Activated CD8-positive, alpha-beta T cell treated with anti-CD3 and anti-CD28 coated beads for 36 hours (primary cell): ENCODE measurements at regions of chr3 and their contacts with region 1.

Region 1: GRCh38 chr3:161274719-161275298 is 53.7 kb downstream of the NMD3 start:
- DNase-seq: peak; percentile 63
- ATAC-seq: peak; percentile 42
- H3K4me3 Mint-ChIP-seq: no peak overlapping the region
- H3K27ac Mint-ChIP-seq: no peak overlapping the region
- H3K4me1 Mint-ChIP-seq: no peaks in the 10 kb centered on the region
- H3K27me3 Mint-ChIP-seq: no peaks in the 10 kb centered on the region
- CTCF ChIP-seq: peak; percentile 54

Region 2: DNA sequence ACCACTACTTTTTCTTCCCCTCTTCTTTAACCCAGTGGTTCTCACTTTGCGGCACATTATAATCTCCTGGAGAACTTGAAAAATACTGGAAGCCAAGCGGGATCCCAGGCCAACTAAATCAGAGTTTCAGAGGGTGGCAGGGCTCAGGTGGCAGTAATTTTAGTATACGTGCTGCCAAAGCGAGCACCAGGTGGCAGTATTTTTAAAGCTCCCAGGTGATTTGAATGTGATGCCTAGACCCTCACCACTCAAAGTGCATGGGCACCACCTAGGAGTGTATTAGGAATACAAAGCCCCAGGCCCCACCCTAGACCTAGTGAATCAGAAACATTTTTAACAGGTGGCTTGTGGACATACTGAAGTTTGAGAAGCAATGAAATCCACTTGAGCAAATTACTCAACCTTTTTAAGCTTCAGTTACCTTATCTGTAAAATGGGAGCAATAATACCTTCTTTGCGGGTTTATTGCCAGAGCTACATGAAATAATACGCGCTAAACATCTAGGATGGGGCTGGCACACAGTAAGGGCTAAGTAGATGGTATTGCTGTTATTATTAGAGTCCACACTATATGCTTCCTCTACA is 177.9 kb before region 1 on chr3:
- CTCF ChIA-PET with region 1: interaction called, 17 read pairs
- POLR2A ChIA-PET with region 1: no interaction called
- intact Hi-C with region 1: no loop called
- DNase-seq: peak; percentile 41
- ATAC-seq: peak; percentile 24
- H3K4me3 Mint-ChIP-seq: no peak overlapping the region
- H3K27ac Mint-ChIP-seq: no peak overlapping the region
- H3K4me1 Mint-ChIP-seq: no peaks in the 10 kb centered on the region
- H3K27me3 Mint-ChIP-seq: no peaks in the 10 kb centered on the region
- CTCF ChIP-seq: peak; percentile 40

Region 3: GRCh38 chr3:161284989-161285388 is 10.2 kb after region 1 on chr3:
- CTCF ChIA-PET with region 1: interaction called, 11 read pairs
- POLR2A ChIA-PET with region 1: no interaction called
- intact Hi-C with region 1: no loop called
- DNase-seq: no peak
- ATAC-seq: no peak
- H3K4me3 Mint-ChIP-seq: no peak overlapping the region
- H3K27ac Mint-ChIP-seq: no peak overlapping the region
- H3K4me1 Mint-ChIP-seq: no peaks in the 10 kb centered on the region
- H3K27me3 Mint-ChIP-seq: no peaks in the 10 kb centered on the region
- CTCF ChIP-seq: no peak

Region 4: GRCh38 chr3:161291195-161291912 is 16.5 kb after region 1 on chr3:
- CTCF ChIA-PET with region 1: interaction called, 14 read pairs
- POLR2A ChIA-PET with region 1: no interaction called
- intact Hi-C with region 1: no loop called
- DNase-seq: no peak
- ATAC-seq: no peak
- H3K4me3 Mint-ChIP-seq: no peak overlapping the region
- H3K27ac Mint-ChIP-seq: no peak overlapping the region
- H3K4me1 Mint-ChIP-seq: no peaks in the 10 kb centered on the region
- H3K27me3 Mint-ChIP-seq: peaks cover 2% of the 10 kb centered on the region
- CTCF ChIP-seq: no peak

Region 5: GRCh38 chr3:161305095-161305991 is 30.5 kb after region 1 on chr3:
- CTCF ChIA-PET with region 1: interaction called, 26 read pairs
- POLR2A ChIA-PET with region 1: no interaction called
- intact Hi-C with region 1: no loop called
- DNase-seq: peak; percentile 20
- ATAC-seq: peak; percentile 58
- H3K4me3 Mint-ChIP-seq: no peak overlapping the region
- H3K27ac Mint-ChIP-seq: no peak overlapping the region
- H3K4me1 Mint-ChIP-seq: peaks cover 30% of the 10 kb centered on the region
- H3K27me3 Mint-ChIP-seq: peaks cover 25% of the 10 kb centered on the region
- CTCF ChIP-seq: peak; percentile 86

Region 6: GRCh38 chr3:161409069-161409468 is 134.3 kb after region 1 on chr3:
- CTCF ChIA-PET with region 1: interaction called, 52 read pairs
- POLR2A ChIA-PET with region 1: no interaction called
- intact Hi-C with region 1: loop called (anchors 1 kb)
- DNase-seq: peak; percentile 56
- ATAC-seq: peak; percentile 58
- H3K4me3 Mint-ChIP-seq: no peak overlapping the region
- H3K27ac Mint-ChIP-seq: no peak overlapping the region
- H3K4me1 Mint-ChIP-seq: peaks cover 17% of the 10 kb centered on the region
- H3K27me3 Mint-ChIP-seq: peaks cover 6% of the 10 kb centered on the region
- CTCF ChIP-seq: peak; percentile 83

Region 7: DNA sequence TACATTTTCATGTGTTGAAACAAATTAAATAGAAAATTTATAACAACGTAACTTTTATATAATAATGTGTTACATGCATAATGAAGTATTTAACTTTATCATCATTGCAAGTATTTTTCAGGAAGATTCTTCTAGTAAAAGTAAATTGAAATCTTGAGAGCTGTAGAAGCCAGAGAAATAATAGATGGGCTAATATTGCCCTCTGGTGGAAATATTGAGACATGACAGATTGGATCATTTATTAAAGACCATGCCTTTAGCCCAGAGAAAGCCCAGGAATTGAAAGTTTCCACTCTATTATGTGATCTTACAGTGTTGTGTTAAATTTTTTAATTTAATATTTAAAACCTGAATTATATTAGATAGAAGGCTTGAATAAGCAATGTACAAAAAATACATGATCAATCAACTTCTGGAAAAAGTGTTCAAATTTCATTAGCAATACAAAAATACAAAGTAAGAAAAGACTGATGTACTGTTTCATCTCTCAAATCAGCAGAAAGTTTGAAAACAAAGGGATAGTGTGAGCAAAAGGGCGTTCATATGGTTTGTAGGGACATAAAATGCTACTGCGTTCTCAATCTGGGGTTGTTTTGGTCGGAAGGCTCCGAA is 149.2 kb after region 1 on chr3:
- CTCF ChIA-PET with region 1: interaction called, 48 read pairs
- POLR2A ChIA-PET with region 1: no interaction called
- intact Hi-C with region 1: loop called (anchors 5 kb)
- DNase-seq: no peak
- ATAC-seq: peak; percentile 42
- H3K4me3 Mint-ChIP-seq: no peak overlapping the region
- H3K27ac Mint-ChIP-seq: no peak overlapping the region
- H3K4me1 Mint-ChIP-seq: no peaks in the 10 kb centered on the region
- H3K27me3 Mint-ChIP-seq: no peaks in the 10 kb centered on the region
- CTCF ChIP-seq: peak; percentile 83